Activated naive CD4-positive, alpha-beta T cell treated with anti-CD3 and anti-CD28 coated beads for 36 hours (primary cell): ENCODE measurements at regions of chr1 and their contacts with region 1.

Region 1: DNA sequence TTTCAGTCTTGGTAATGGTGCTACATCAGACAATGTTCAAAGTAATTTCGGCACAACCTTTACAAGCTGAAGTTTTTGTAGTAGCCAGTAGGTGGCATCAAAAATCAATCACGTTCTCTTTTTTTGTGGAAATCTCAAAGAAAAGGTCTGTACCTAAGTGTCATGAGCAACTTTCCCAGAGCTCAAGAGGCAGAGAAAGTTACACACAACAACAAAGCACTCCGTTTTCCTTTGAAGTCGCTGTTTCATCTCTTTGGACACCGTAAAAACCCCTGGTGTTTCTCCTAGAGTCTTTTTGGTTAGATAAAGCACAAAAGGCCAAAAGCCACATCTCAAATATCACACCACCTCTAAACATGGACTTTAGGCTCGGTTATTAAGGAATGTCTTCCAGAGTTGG is 131.6 kb downstream of the LHX8 start:
- DNase-seq: no peak
- H3K4me3 Mint-ChIP-seq: no peak overlapping the region
- H3K27ac Mint-ChIP-seq: no peak overlapping the region
- H3K4me1 Mint-ChIP-seq: no peaks in the 10 kb centered on the region
- H3K27me3 Mint-ChIP-seq: no peaks in the 10 kb centered on the region

Region 2: GRCh38 chr1:75276385-75276784 is 10.6 kb after region 1 on chr1:
- CTCF ChIA-PET with region 1: interaction called, 23 read pairs
- intact Hi-C with region 1: no loop called
- DNase-seq: no peak
- H3K4me3 Mint-ChIP-seq: no peak overlapping the region
- H3K27ac Mint-ChIP-seq: no peak overlapping the region
- H3K4me1 Mint-ChIP-seq: no peaks in the 10 kb centered on the region
- H3K27me3 Mint-ChIP-seq: no peaks in the 10 kb centered on the region

Region 3: GRCh38 chr1:75373533-75374320 is 107.9 kb after region 1 on chr1:
- CTCF ChIA-PET with region 1: interaction called, 3 read pairs
- intact Hi-C with region 1: loop called (anchors 1 kb)
- DNase-seq: no peak
- H3K4me3 Mint-ChIP-seq: no peak overlapping the region
- H3K27ac Mint-ChIP-seq: no peak overlapping the region
- H3K4me1 Mint-ChIP-seq: no peaks in the 10 kb centered on the region
- H3K27me3 Mint-ChIP-seq: no peaks in the 10 kb centered on the region

Region 4: DNA sequence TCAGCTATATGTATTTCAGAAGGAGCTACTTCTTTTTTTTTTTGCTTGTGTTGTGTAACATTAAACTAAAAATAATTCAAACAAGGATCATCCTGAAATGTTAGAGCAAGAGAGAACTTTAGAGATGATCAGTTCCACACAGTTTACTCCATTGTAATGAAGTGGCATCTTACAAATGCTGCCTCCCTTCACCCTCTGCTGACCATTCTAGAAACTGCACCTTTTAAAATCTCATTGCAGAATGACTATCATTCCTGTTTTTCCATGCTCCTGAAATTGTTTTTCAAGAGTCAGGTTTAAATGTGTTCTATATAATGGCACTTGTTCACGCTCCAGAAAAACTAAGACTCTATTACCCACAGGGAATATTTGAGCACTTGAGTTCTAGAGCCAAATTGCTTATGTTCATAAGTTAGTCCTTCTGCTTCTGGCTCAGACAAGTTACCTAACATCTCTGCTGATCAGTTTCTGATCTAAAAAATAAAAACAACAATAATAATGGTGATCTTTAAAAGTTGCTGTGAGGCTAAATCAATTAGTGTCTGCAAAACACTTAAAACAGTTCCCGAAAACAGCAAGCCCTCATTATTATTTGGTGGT is 366.7 kb after region 1 on chr1:
- CTCF ChIA-PET with region 1: interaction called, 11 read pairs
- intact Hi-C with region 1: loop called (anchors 1 kb)
- DNase-seq: no peak
- H3K4me3 Mint-ChIP-seq: no peak overlapping the region
- H3K27ac Mint-ChIP-seq: no peak overlapping the region
- H3K4me1 Mint-ChIP-seq: no peaks in the 10 kb centered on the region
- H3K27me3 Mint-ChIP-seq: peaks cover 16% of the 10 kb centered on the region

Region 5: GRCh38 chr1:76444773-76445172 is 1179.0 kb after region 1 on chr1:
- CTCF ChIA-PET with region 1: no interaction called
- intact Hi-C with region 1: no loop called
- DNase-seq: no peak
- H3K4me3 Mint-ChIP-seq: no peak overlapping the region
- H3K27ac Mint-ChIP-seq: no peak overlapping the region
- H3K4me1 Mint-ChIP-seq: peaks cover 29% of the 10 kb centered on the region
- H3K27me3 Mint-ChIP-seq: no peaks in the 10 kb centered on the region